ENCODE measurements at regions of chr9 and their contacts with region 1.

Region 1: DNA sequence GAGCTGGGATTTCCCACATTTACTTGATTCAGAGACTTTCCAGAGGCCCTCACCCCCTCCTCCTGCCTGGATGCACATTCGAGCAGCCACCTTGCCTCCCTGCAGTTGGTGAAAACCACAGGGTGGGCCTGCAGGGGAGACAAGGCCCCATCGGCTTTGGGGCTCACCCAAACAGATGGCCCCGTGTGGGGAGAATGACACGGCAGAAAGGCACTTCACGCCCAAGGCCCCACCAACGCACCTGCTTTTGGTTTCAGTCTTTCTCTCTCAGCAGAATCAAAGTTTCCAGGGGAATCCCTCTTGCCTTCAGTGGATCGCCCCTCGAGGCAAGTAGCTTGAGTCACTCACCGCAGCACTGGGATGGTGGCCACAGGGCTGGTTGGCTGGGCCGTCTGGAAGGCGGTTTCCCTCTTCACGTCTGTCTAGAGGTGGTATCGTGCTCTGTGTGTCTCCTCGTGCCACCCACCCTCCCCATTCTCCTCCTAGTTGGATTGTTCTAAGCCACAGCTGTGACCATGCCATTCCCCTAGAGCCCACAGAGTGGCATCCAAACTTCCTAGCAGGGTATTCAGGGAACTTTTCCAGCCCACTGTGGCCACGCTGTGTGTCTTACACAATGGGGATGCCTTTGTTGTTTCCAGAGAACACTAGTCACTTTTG is 31.8 kb downstream of the SEC61B start:
- DNase-seq: peak; percentile 82
- H3K4me3 Mint-ChIP-seq: peak overlapping the region; percentile 55
- H3K27ac Mint-ChIP-seq: peak overlapping the region; percentile 92
- H3K4me1 Mint-ChIP-seq: peaks cover 62% of the 10 kb centered on the region
- H3K27me3 Mint-ChIP-seq: no peaks in the 10 kb centered on the region

Region 2: GRCh38 chr9:99221621-99222415 is 32.1 kb before region 1 on chr9 and contains the starts of genes ALG2 and SEC61B:
- intact Hi-C with region 1: loop called (anchors 1 kb)
- DNase-seq: peak; percentile 89
- H3K4me3 Mint-ChIP-seq: peak within 1 kb of the TSS; percentile 99
- H3K27ac Mint-ChIP-seq: peak within 1 kb of the TSS; percentile 98
- H3K4me1 Mint-ChIP-seq: peaks cover 67% of the 10 kb centered on the region
- H3K27me3 Mint-ChIP-seq: no peaks in the 10 kb centered on the region
- total RNA-seq, gene ALG2: 37.6 and 39.7 TPM in 2 replicates
- total RNA-seq, gene SEC61B: 180 and 184 TPM in 2 replicates

Region 3: DNA sequence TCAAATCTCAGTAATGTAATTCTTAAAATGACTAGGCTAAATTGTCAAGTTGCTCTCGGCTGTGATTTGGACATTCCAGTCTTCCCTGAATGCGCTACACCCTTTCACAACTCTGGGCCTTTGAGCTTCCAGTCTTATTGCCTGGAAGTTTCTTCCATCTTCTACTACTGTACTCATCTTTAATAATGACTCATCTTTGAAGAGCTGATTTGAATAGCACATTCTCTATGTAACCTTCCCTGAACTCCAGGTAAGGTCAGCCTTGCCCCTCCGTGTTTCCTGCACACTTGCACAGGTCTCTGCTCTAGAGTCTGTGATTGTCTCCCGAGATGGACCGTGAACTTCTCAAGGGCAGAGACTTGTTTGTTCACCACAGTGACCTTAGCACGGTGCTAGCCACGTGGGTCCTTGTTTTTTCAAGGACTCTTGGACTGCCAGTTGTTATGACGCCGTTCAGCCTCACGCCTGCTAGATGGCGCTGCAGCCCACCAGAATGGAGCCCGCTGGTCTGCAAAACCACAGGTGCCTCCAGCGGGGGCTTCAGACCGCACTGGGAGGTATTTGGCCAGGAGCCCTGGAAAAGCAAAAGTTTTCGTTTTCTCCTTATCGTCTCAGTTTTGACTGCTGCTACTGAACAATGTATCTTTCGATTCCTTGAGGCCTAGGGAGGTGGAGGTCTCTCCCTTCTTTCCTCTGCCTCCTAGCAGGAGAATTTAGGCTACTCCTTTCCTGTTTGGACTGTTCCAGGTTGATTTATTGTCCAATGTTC is 12.5 kb after region 1 on chr9:
- intact Hi-C with region 1: loop called (anchors 1 kb)
- DNase-seq: peak; percentile 50
- H3K4me3 Mint-ChIP-seq: peak overlapping the region; percentile 3
- H3K27ac Mint-ChIP-seq: no peak overlapping the region
- H3K4me1 Mint-ChIP-seq: peaks cover 14% of the 10 kb centered on the region
- H3K27me3 Mint-ChIP-seq: peaks cover 14% of the 10 kb centered on the region

Region 4: GRCh38 chr9:99868845-99869244 is 614.9 kb after region 1 on chr9:
- intact Hi-C with region 1: loop called (anchors 5 kb)
- DNase-seq: no peak
- H3K4me3 Mint-ChIP-seq: no peak overlapping the region
- H3K27ac Mint-ChIP-seq: peak overlapping the region; percentile 55
- H3K4me1 Mint-ChIP-seq: peaks cover 45% of the 10 kb centered on the region
- H3K27me3 Mint-ChIP-seq: no peaks in the 10 kb centered on the region